Activated CD4-positive, alpha-beta T cell treated with anti-CD3 and anti-CD28 coated beads, Interleukin-2, amount 10 ng/mL, durations not matched to agents 7 days and 5 days (primary cell): ENCODE measurements at regions of chr14 and their contacts with region 1.

Region 1: DNA sequence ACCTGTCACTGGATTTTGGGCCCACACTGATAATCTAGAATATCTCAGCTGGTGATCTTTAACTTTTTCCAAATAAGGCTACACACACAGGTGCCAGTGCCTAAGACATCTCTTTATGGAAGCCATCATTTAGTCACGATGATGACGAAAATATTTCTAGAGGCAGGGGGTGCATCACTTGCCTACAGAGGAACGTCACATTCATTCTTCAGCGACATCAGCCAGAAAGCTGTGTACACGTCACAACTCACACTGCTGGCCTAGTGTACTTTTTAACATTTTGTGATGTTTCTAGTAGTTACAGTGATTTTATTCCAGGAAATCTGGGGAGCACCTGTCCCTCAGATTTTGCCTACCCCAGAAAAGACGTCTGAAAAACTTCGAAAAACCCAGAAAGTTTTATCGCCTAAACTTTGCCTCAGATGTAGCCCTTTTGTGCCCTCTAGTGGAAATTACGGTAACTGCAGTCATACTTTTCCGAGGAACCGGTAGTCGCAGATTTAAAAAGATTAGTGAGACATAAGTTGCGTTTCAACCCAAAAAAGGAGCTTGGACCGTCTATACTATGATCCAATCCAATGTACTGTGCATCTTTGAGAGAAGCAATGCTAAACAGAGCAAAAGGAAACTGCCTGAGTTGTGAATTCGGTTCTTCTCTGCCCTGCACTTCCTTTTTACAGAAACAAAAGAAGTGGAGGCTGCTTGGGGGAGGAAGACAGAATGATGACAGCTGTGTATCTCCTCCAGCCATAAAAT is 64.3 kb upstream of the STON2 start:
- DNase-seq: peak; percentile 82
- H3K4me3 Mint-ChIP-seq: peak overlapping the region; percentile 66
- H3K27ac Mint-ChIP-seq: peak overlapping the region; percentile 89
- H3K4me1 Mint-ChIP-seq: peaks cover 14% of the 10 kb centered on the region
- H3K27me3 Mint-ChIP-seq: no peaks in the 10 kb centered on the region

Region 2: DNA sequence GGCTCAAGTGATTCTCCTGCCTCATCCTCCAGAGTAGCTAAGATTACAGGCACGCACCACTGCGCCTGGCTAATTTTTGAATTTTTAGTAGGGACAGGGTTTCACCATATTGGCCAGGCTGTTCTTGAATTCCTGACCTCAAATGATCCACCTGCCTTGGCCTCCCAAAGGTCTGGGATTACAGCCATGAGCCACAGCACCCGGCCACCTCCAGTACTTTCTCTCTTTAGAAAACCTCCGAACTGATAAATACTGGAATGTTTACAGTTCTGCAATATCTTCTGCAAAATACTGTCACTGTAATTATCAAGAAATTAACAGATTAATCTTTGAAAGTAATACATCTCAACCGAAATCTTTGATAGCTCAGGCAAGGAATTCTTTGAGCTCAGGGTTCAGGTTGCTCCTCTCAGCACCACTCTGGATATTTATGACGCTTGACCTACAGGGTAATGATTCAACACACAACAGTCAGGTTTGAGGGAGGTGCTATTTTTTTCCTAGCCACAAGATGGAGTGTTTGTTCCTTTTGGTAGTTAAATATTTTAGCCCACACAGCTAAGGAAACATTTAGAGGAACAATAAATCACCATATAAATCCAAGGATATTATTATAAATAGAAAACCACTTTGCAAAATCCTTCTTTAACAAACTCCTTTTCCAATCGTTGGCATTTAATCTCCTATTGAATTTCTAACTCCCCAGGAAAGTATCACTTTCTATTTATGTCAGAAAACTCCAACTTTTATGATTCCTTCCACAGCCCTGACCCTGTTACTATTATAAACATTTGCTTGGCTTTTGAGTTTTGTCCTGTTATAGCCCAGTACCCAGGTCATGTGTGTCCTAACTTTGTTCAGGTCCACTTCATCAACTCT is 195.1 kb before region 1 on chr14:
- CTCF ChIA-PET with region 1: interaction called, 11 read pairs
- POLR2A ChIA-PET with region 1: no interaction called
- DNase-seq: peak; percentile 33
- H3K4me3 Mint-ChIP-seq: no peak overlapping the region
- H3K27ac Mint-ChIP-seq: no peak overlapping the region
- H3K4me1 Mint-ChIP-seq: peaks cover 27% of the 10 kb centered on the region
- H3K27me3 Mint-ChIP-seq: peaks cover 22% of the 10 kb centered on the region

Region 3: DNA sequence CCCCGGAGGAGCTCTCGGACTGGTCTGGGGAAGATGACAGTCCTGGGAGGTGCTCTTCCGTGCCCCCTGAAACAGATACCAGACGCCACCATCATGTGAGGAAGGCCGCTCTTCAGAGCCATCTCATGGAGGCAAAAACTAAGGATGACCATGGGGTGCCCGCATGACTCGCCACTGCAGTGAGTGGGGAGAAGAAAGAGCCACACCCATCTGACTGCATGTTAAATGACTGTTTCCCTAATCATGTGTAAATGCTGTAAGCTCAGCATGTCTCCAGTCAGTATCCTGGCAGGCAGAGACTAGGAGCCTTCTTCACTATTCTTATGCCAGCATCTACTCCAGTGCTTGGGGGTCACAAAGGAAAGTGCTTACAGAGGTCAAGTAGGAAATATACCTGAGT is 68.3 kb before region 1 on chr14:
- CTCF ChIA-PET with region 1: no interaction called
- POLR2A ChIA-PET with region 1: no interaction called
- DNase-seq: no peak
- H3K4me3 Mint-ChIP-seq: no peak overlapping the region
- H3K27ac Mint-ChIP-seq: no peak overlapping the region
- H3K4me1 Mint-ChIP-seq: peaks cover 5% of the 10 kb centered on the region
- H3K27me3 Mint-ChIP-seq: no peaks in the 10 kb centered on the region